ENCODE measurements at regions of chr11 and their contacts with region 1.

Region 1: DNA sequence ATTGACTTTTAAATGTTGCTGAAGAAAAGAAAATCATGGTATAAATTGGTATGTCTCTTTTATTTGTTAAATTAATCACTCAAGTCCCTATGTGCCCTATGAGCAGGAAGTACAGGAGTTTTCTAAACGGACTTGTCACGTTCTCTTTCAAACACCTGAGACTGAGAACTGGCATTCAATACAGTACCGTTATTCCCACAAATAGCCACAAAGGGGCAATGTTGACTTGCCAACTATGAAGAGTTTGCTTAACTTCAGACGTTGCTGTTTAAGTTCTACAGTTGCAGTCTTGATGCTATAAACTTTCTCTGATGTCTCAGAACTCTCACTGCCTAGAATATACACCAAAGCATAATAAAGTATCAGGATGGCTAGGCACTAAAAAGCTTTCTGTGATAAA is 7.6 kb downstream of the OR56A1 start:
- DNase-seq: no peak
- CTCF ChIP-seq: no peak

Region 2: GRCh38 chr11:5581014-5581413 is 441.9 kb before region 1 on chr11:
- in situ Hi-C with region 1: no loop called
- DNase-seq: no peak
- CTCF ChIP-seq: no peak

Region 3: GRCh38 chr11:6156628-6157359 is 133.8 kb after region 1 on chr11:
- in situ Hi-C with region 1: no loop called
- DNase-seq: no peak
- CTCF ChIP-seq: no peak

Region 4: DNA sequence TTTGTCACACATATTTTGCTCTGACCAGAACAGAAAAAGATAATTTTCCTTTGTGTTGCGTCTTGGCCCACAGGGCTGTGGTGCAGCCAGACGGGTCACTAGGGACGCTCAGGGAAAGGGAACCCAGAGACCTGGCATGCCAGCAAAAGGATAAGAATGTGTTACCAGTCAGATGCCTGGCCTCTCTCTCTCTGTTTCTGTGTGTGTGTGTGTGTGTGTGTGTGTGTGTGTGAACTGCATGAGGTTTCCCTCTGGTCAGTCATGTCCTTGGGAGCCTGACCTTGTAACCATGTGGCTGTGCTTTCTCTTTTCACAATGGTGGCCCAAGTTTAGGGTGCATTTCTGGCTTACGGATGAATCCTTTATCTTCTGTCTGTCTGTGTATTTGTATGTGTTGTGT is 262.1 kb after region 1 on chr11:
- in situ Hi-C with region 1: no loop called
- DNase-seq: no peak
- CTCF ChIP-seq: no peak

Region 5: GRCh38 chr11:6315811-6316425 is 293.0 kb after region 1 on chr11:
- in situ Hi-C with region 1: loop called (anchors 25 kb)
- DNase-seq: peak; percentile 73
- CTCF ChIP-seq: peak; percentile 81

Region 6: DNA sequence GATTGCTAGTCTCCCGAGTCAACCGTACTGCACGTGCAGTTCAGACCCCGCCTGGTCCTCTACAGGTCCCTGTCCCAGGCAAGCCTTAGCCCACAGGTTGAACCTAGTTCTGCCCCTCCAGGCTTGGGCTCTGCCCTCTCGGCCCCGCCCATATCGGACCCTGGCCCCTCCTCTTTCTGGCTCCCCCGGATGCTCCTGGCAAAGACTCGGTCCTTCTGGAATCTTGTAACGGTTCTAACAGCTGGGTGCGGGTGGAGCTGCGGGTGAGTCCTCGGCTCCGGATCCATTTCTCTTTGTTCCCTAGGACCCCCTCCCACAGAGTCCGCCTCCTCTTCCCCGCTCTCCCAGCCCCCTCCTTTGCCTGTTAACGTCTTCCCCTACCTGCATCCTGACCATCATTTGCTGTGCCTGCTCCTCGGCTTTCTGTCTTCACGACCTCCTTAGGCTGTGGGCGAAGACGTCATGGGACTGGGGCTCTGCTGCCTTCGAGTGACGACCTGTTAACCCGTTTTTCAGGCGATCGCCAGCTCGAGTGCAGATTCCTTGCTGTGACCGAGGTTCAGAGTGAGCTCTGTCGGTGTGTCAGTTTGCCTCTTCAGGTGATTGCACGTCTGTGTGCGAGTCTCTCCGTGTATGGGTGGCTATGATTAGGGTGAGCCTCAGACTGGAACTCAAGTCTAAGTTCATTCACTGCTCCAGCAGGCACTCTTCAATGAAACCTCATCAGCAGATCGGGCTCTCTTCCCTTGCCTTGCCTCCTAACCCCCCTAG is 474.3 kb after region 1 on chr11 and contains the start of gene DNHD1:
- in situ Hi-C with region 1: no loop called
- DNase-seq: no peak
- CTCF ChIP-seq: no peak